Activated CD4-positive, alpha-beta T cell treated with anti-CD3 and anti-CD28 coated beads, Interleukin-2, amount 10 ng/mL, durations not matched to agents 7 days and 5 days (primary cell): ENCODE measurements at regions of chr19 and their contacts with region 1.

Region 1: DNA sequence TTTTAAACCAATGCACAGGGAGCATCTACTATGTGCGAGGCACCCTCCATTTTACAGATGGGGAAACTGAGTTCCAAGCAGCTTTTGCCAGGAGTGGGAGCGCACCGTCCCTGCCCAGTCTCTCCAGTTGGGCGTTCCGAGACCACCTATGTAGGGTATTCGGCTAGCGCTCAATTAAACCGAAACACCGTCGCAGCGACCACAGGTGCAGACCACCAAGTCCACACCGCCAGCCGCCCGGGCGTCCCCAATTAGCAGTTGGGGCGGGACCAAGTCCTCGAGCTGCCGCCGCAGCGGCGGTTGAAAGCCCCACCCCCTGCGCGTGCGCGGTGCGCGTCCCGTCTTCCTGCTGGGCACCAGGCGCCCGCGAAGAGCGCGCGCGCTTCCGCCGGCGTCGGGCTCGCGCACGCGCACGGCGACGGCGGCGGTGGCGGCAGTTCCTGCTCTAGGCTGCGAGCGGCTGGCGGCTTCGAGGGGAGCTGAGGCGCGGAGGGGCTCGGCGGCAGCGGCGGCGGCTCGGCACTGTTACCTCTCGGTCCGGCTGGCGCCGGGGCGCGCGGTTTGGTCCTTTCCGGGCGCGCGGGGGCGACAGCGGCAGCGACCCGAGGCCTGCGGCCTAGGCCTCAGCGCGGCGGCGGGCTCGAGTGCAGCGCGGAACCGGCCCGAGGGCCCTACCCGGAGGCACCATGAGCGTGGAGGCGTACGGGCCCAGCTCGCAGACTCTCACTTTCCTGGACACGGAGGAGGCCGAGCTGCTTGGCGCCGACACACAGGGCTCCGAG is at the start of gene UPF1:
- DNase-seq: peak; percentile 97
- H3K4me3 Mint-ChIP-seq: peak within 1 kb of the TSS; percentile 96
- H3K27ac Mint-ChIP-seq: peak within 1 kb of the TSS; percentile 92
- H3K4me1 Mint-ChIP-seq: peaks cover 32% of the 10 kb centered on the region
- H3K27me3 Mint-ChIP-seq: peaks cover 13% of the 10 kb centered on the region
- total RNA-seq, gene UPF1: 89.4 to 97.3 TPM

Region 2: DNA sequence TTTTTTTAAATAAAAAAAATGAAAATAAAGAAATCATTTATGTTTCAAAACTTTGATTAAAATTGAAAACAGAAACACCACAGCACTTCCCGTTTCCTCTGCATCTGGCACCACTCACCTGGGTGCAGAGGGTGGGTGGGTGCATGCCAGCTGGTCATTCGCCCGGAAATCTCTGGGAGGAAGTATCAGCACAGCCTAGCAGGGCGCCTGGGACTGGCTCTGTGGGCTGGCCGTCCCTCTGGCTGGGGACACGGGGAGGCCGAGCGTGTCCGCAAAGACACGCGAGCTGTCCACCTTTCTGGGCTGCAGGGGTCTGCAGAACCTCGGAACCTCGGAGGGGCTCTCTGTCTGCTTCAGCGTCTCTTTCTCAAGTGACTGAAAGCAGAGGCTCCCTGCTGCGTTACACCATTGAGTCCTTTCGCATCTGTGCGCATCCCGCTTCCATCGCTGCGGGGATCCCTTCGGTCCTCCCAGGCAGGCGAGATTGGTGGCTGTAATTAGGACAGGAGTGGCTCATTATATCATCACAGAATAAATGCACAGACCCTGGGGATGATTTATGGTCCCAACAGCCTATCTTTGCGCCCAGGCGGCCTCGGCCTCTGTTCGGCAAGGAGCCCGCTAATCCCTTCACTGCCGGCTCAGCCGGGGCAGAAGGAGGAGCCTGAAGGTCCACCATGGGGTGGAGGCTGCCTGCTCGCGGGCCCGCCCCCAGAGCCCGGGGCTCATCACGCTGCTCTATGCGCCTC is 131.0 kb before region 1 on chr19:
- CTCF ChIA-PET with region 1: no interaction called
- POLR2A ChIA-PET with region 1: no interaction called
- DNase-seq: peak; percentile 78
- H3K4me3 Mint-ChIP-seq: peak overlapping the region; percentile 76
- H3K27ac Mint-ChIP-seq: peak overlapping the region; percentile 94
- H3K4me1 Mint-ChIP-seq: peaks cover 30% of the 10 kb centered on the region
- H3K27me3 Mint-ChIP-seq: no peaks in the 10 kb centered on the region

Region 3: DNA sequence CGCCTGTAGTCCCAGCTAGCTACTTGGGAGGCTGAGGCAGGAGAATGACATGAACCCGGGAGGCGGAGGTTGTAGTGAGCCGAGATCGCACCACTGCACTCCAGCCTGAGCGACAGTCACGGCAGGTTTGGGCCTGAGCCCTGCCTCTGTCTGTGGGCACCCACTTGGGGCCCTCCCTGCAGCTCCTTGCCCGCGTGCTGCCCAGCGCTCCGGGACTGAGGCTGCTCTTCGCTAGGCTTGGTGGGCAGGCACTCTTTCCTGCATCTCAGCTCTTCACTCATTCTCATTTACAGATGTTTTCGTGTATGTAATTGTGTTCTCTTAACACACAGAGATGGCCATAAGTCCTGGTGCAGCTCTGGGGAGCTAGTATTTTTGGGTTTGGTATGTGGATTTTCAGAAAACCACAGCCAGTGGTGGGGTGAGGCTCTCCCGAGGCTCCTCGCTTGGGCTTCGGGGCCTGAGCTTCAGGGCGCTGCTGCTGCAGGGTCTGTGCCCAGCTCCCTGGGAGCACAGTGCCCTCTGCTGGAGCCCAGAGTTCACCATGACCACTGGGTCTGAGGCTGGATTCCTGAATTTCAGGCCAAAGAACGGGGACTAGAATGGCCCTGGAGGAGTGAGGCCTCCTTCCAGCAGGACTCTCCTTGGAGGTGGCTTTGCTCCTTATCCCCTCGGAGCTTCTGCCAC is 15.3 kb after region 1 on chr19:
- CTCF ChIA-PET with region 1: interaction called, 11 read pairs
- POLR2A ChIA-PET with region 1: no interaction called
- DNase-seq: peak; percentile 71
- H3K4me3 Mint-ChIP-seq: no peak overlapping the region
- H3K27ac Mint-ChIP-seq: peak overlapping the region; percentile 81
- H3K4me1 Mint-ChIP-seq: peaks cover 67% of the 10 kb centered on the region
- H3K27me3 Mint-ChIP-seq: no peaks in the 10 kb centered on the region